ENCODE measurements at regions of chr22 and their contacts with region 1.

Region 1: DNA sequence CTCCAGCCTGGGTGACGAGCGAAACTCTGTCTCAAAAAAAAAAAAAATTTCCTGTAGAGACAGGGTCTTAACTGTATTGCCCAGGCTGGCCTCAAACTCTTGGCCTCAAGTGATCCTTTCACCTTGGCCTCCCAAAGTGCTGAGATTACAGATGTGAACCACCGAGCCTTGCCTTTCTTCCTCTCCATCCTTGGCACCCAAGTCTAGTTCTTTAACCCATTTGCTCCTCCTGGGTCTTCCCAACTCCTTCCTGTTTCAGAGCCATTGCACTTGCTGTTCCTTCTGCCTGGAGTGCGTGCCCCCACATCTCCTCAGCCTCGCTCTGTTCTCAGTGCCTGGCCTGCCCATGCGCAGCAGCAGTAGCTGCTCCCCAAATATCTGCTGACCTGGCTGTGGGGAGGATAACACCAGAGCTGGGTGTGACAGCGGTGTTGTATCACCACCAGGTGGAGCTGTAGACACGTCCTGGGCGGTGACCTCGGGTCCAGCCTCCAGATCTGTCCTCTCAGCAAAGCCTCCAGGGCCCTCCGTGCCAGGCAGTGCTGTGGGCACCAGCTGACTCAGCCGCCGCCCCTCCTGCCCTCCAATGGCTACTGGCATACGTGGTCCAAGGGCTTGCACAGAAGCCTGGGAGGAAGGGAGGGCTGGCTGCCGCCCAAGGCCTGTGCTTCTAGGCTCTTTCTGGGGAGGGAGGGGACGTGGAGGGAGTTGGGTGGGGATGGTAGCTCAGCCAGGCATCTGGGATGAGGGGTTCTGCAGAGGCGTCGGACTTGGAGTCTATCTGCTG is 22.0 kb downstream of the TEF start:
- DNase-seq: peak; percentile 95
- H3K4me3 Mint-ChIP-seq: peak overlapping the region; percentile 2
- H3K27ac Mint-ChIP-seq: no peak overlapping the region
- H3K4me1 Mint-ChIP-seq: peaks cover 21% of the 10 kb centered on the region
- H3K27me3 Mint-ChIP-seq: no peaks in the 10 kb centered on the region
- CTCF ChIP-seq: peak; percentile 94

Region 2: GRCh38 chr22:41264408-41264941 is 139.2 kb before region 1 on chr22:
- CTCF ChIA-PET with region 1: no interaction called
- intact Hi-C with region 1: no loop called
- DNase-seq: no peak
- H3K4me3 Mint-ChIP-seq: no peak overlapping the region
- H3K27ac Mint-ChIP-seq: peak overlapping the region; percentile 1
- H3K4me1 Mint-ChIP-seq: no peaks in the 10 kb centered on the region
- H3K27me3 Mint-ChIP-seq: no peaks in the 10 kb centered on the region
- CTCF ChIP-seq: no peak

Region 3: DNA sequence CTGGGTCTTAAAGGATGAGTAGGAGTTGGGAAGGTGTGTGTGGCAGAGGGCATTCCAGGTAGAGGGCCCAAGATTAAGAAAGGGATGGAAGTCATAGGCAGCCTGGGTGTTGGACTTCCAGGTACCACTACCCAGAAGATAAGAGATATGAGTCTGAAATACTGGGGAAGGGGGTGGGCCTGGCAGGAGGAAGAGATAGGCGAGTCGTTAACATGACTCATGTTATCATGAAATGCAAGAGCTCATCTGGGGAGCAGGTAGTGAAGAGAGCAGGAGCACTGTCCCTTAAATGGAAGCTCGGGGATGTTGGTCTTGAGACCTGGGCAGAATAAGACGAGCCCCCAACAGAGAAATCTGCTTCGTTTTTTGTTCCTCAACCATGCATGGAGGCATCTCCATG is 92.2 kb before region 1 on chr22:
- CTCF ChIA-PET with region 1: no interaction called
- intact Hi-C with region 1: no loop called
- DNase-seq: no peak
- H3K4me3 Mint-ChIP-seq: no peak overlapping the region
- H3K27ac Mint-ChIP-seq: no peak overlapping the region
- H3K4me1 Mint-ChIP-seq: peaks cover 20% of the 10 kb centered on the region
- H3K27me3 Mint-ChIP-seq: no peaks in the 10 kb centered on the region
- CTCF ChIP-seq: no peak

Region 4: GRCh38 chr22:41381329-41382097 is 22.2 kb before region 1 on chr22 and contains the start of gene TEF:
- CTCF ChIA-PET with region 1: interaction called, 13 read pairs
- intact Hi-C with region 1: no loop called
- DNase-seq: peak; percentile 98
- H3K4me3 Mint-ChIP-seq: peak within 1 kb of the TSS; percentile 89
- H3K27ac Mint-ChIP-seq: peak within 1 kb of the TSS; percentile 93
- H3K4me1 Mint-ChIP-seq: peaks cover 8% of the 10 kb centered on the region
- H3K27me3 Mint-ChIP-seq: peaks cover 14% of the 10 kb centered on the region
- CTCF ChIP-seq: no peak
- total RNA-seq, gene TEF: 4.6 and 6.3 TPM in 2 replicates

Region 5: GRCh38 chr22:41468381-41469217 is 64.9 kb after region 1 on chr22 and contains the starts of genes ACO2 and PHF5A:
- CTCF ChIA-PET with region 1: interaction called, 10 read pairs
- intact Hi-C with region 1: no loop called
- DNase-seq: peak; percentile 97
- H3K4me3 Mint-ChIP-seq: peak within 1 kb of the TSS; percentile 91
- H3K27ac Mint-ChIP-seq: peak within 1 kb of the TSS; percentile 100
- H3K4me1 Mint-ChIP-seq: peaks cover 24% of the 10 kb centered on the region
- H3K27me3 Mint-ChIP-seq: no peaks in the 10 kb centered on the region
- CTCF ChIP-seq: no peak
- total RNA-seq, gene ACO2: 94.0 and 94.5 TPM in 2 replicates
- total RNA-seq, gene PHF5A: 53.3 and 68.5 TPM in 2 replicates

Region 6: DNA sequence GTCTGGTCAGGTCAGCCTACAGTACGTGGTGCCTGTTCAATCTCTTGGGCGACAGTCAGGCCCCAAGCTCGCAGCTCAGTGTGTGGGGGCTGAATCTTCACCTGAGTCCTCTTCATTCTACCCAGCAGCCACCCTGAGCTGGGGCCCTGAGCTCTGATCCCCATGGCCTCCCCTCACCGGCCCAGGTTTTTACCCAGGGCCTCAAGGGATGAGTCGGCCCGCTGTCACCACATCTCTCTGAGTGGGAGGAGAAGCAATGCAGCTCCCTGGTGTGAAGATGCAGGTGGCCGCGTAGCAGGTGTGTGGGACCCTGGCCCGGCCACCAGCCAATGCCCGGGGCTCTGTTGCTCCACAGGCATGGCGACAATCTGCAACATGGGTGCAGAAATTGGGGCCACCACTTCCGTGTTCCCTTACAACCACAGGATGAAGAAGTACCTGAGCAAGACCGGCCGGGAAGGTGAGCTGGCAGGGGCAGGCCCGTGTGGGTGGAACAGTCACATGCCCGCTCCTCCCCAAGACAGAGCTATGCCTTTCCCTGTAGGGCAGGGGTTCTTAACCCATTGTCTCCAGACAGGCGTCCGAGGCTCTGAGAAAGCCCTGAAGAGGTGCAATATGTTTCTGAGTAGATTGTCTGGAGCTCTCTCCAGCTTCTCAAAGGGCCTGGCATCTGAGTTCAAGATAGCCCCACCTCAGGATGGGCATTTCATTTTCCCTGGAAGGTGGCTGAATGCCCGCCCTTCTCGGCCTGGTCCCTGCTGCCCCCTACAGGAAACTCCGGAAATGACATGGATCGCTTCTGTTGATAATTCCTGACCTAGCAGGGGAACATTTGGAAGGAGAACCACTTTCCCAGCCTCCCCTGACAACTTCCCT is 113.7 kb after region 1 on chr22:
- CTCF ChIA-PET with region 1: interaction called, 34 read pairs
- intact Hi-C with region 1: loop called (anchors 1 kb)
- DNase-seq: peak; percentile 84
- H3K4me3 Mint-ChIP-seq: no peak overlapping the region
- H3K27ac Mint-ChIP-seq: no peak overlapping the region
- H3K4me1 Mint-ChIP-seq: peaks cover 15% of the 10 kb centered on the region
- H3K27me3 Mint-ChIP-seq: no peaks in the 10 kb centered on the region
- CTCF ChIP-seq: peak; percentile 92

Region 7: DNA sequence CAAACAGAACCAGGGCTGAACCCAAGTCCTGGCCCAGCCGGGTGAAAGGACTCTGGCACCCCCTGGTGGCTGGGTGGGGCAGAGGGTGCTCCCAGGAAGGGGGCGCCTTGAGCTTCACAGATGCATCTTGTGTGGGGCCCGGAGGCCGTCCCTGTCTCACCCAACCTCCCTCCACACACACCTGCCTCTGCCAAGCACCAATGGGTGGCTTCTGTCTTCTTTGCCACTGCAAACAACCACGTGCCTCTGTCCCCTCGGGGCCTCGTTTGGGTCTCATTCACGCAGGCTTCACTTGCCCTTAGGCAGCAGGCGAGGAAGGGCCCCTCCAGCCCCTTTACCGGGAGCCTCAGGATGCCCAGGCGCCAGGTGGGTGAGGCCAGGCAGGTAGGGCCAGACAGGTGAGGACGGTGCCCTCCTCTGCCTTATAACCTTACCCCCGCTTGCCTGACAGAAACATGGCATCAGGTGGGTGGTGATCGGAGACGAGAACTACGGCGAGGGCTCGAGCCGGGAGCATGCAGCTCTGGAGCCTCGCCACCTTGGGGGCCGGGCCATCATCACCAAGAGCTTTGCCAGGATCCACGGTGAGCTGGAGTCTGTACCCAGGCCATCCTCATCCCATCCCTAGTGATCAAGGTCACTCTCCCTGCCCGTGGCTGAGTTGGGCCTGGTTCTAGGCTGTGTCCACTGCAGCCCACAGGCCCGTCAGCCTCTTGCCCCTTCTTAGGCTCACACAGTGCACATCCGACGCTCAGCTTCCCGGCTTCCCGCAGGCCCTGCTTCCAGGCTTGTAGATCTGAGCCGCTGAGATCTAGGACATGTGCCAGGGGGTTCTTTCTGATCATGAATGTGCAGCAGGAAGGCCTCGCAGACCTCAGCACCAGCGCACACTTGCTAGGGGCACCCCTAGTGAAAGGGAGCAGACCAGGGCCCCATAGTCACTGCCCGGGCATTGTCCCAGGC is 123.4 kb after region 1 on chr22:
- CTCF ChIA-PET with region 1: interaction called, 13 read pairs
- intact Hi-C with region 1: no loop called
- DNase-seq: peak; percentile 71
- H3K4me3 Mint-ChIP-seq: no peak overlapping the region
- H3K27ac Mint-ChIP-seq: peak overlapping the region; percentile 77
- H3K4me1 Mint-ChIP-seq: no peaks in the 10 kb centered on the region
- H3K27me3 Mint-ChIP-seq: no peaks in the 10 kb centered on the region
- CTCF ChIP-seq: peak; percentile 96